K562 (cell line): ENCODE measurements at regions of chr5 and their contacts with region 1.

Region 1: DNA sequence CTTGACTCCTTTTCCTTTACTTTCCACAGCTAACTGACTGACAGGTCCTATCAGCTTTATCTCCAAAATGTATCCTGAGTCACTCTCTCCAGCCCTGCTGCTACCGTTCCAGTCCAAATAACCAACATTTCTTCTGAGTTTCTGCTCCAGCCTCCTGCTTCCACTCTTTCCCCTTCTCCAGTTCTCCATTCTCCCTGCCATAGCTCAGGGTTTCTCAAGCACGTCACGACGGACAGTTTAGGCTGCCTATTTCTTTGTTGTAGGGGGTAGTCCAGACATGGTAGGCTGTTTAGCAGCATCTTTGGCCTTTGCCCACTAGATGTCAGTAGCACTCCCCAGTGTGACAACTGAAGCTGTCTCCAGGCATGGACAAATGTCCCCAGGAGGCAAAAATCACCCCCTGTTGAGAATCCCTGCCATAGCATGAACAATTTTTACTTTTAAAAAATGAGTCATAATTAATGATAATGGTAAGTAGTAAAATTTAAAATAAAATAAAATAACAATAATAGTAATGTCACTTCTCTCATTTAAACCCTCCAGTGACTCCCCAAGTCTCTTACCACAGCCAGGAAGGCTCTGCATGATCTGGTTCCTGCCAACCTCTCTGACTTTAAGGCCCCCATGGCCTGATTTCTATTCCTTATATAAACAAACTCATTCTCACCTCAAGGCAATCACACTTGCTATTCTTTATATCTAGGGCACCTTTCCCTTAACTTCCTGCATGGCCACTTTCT is 105.4 kb upstream of the FER start:
- DNase-seq: peak; percentile 57 to 82 (median 68)
- ATAC-seq: peak; percentile 100
- H3K4me3 ChIP-seq: no peak overlapping the region
- H3K27ac ChIP-seq: peak overlapping the region; percentile 48; the same call in 1 of the 3 replicates
- H3K4me1 ChIP-seq: peaks cover 0 to 6% of the 10 kb centered on the region in 2 experiments; a peak in 1 of 5 replicates
- H3K27me3 ChIP-seq: no peaks in the 10 kb centered on the region; a peak in 1 of 5 replicates
- CTCF ChIP-seq: peak; percentile 82 to 92 (median 87)
- EP300 ChIP-seq: no peak
- POLR2A ChIP-seq: no peak
- RAD21 ChIP-seq: peak; percentile 89 to 91

Region 2: GRCh38 chr5:108623811-108624210 is 18.5 kb before region 1 on chr5:
- CTCF ChIA-PET with region 1: no interaction called
- POLR2A ChIA-PET with region 1: no interaction called
- in situ Hi-C with region 1: no loop called
- intact Hi-C with region 1: no loop called
- DNase-seq: no peak
- ATAC-seq: no peak
- H3K4me3 ChIP-seq: no peak overlapping the region
- H3K27ac ChIP-seq: no peak overlapping the region
- H3K4me1 ChIP-seq: no peaks in the 10 kb centered on the region
- H3K27me3 ChIP-seq: peaks cover 0 to 4% of the 10 kb centered on the region in 2 experiments; a peak in 1 of 5 replicates
- CTCF ChIP-seq: no peak
- EP300 ChIP-seq: no peak
- POLR2A ChIP-seq: no peak
- RAD21 ChIP-seq: no peak

Region 3: DNA sequence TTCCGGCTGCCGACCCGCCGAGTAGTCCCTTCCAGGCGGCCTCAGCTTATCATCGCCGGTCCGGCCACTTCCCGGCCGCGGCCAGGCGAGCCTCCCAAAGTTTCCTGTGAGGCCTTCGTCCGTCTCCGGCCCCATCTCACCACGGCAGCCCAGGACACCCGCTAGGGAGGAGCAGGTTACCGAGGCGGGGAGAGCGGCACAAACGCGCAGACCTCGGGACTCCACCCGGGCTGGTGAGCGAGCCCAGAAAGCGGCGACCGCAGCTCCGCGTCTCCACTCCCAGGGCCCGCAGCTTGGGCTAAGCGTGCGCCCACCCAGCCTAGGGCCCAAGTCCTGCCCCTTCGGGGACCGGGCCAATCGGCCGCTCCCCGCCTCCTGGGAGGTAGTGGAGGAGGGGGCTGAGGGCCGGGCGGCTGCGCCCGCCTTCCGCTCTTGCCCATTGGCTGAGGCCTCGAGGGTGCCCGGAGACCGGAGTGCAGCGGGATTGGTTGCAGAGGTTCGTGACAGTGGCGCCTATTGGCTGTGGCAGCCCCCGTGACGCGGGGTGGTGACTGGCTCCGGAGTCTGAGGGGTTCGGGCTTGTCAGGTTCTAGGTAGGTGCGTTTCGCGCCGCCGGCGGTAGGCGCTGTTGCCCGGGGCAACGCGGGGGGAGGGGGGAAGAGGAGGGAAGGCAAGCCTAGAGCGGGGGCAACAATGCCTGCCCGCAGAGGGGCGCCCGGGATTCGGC is 106.2 kb after region 1 on chr5:
- CTCF ChIA-PET with region 1: no interaction called
- POLR2A ChIA-PET with region 1: no interaction called
- in situ Hi-C with region 1: no loop called
- intact Hi-C with region 1: loop called (anchors 2 kb)
- DNase-seq: peak; percentile 96 to 99 (median 98)
- ATAC-seq: peak; percentile 97
- H3K4me3 ChIP-seq: peak overlapping the region; percentile 67
- H3K27ac ChIP-seq: peak overlapping the region; percentile 89
- H3K4me1 ChIP-seq: peaks cover 0 to 12% of the 10 kb centered on the region in 2 experiments; a peak in 1 of 5 replicates
- H3K27me3 ChIP-seq: no peaks in the 10 kb centered on the region
- CTCF ChIP-seq: peak in 1 of 3 experiments; percentile 38; a peak in 2 of 6 replicates
- EP300 ChIP-seq: no peak
- POLR2A ChIP-seq: peak; percentile 99
- RAD21 ChIP-seq: peak in 1 of 2 experiments; percentile 15; a peak in 2 of 4 replicates

Region 4: GRCh38 chr5:109468737-109469420 is 826.5 kb after region 1 on chr5:
- CTCF ChIA-PET with region 1: no interaction called
- POLR2A ChIA-PET with region 1: no interaction called
- in situ Hi-C with region 1: no loop called
- intact Hi-C with region 1: loop called (anchors 5 kb)
- DNase-seq: peak; percentile 84 to 95 (median 88)
- ATAC-seq: peak; percentile 99
- H3K4me3 ChIP-seq: no peak overlapping the region
- H3K27ac ChIP-seq: no peak overlapping the region
- H3K4me1 ChIP-seq: peaks cover 0 to 5% of the 10 kb centered on the region in 2 experiments; a peak in 1 of 5 replicates
- H3K27me3 ChIP-seq: peaks cover 0 to 4% of the 10 kb centered on the region in 2 experiments; a peak in 1 of 5 replicates
- CTCF ChIP-seq: peak; percentile 71 to 93 (median 81)
- EP300 ChIP-seq: 0 out of 2 replicates have a peak, but pooled peaks have one; percentile 32
- POLR2A ChIP-seq: no peak
- RAD21 ChIP-seq: peak; percentile 68 to 86